ENCODE measurements at regions of chr3 and their contacts with region 1.

Region 1: DNA sequence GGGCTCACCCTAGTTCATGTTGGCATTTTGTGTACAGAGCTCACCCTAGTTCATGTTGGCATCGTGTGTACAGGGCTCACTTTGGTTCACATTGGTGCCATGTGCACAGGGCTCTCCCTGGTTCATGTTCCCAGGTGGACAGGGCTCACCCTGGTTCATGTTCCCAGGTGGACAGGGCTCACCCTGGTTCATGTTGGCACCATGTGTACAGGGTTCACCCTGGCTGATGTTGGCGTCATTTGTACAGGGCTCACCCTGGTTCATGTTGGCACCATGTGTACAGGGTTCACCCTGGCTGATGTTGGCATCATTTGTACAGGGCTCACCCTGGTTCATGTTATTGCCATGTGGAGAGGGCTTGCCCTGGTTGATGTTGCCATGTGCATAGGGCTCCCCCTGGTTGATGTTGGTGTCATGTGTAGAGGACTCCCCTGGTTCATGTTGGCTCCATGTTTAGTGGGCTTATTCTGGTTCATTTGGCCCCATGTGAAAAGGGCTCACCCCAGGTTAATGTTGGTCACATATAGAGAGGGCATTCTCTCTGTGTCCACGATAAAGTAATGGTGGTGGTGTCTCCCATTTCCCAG is 31.7 kb upstream of the NR2C2 start:
- DNase-seq: no peak
- ATAC-seq: peak in 1 of 4 donors; percentile 29
- H3K4me3 ChIP-seq: no peak overlapping the region
- H3K27ac ChIP-seq: no peak overlapping the region
- H3K4me1 ChIP-seq: no peaks in the 10 kb centered on the region
- H3K27me3 ChIP-seq: no peaks in the 10 kb centered on the region
- CTCF ChIP-seq: no peak

Region 2: GRCh38 chr3:14511628-14512280 is 404.0 kb before region 1 on chr3:
- intact Hi-C with region 1: loop called in 2 of 3 experiments (anchors 5 kb)
- DNase-seq: no peak
- ATAC-seq: no peak
- H3K4me3 ChIP-seq: no peak overlapping the region
- H3K27ac ChIP-seq: no peak overlapping the region
- H3K4me1 ChIP-seq: no peaks in the 10 kb centered on the region
- H3K27me3 ChIP-seq: no peaks in the 10 kb centered on the region
- CTCF ChIP-seq: no peak

Region 3: GRCh38 chr3:14678015-14678503 is 237.7 kb before region 1 on chr3:
- intact Hi-C with region 1: loop called in 2 of 3 experiments (anchors 10 kb)
- DNase-seq: peak in 1 of 6 donors; percentile 20
- ATAC-seq: peak; percentile 26 to 72 (median 47)
- H3K4me3 ChIP-seq: no peak overlapping the region
- H3K27ac ChIP-seq: no peak overlapping the region
- H3K4me1 ChIP-seq: no peaks in the 10 kb centered on the region
- H3K27me3 ChIP-seq: no peaks in the 10 kb centered on the region
- CTCF ChIP-seq: no peak

Region 4: DNA sequence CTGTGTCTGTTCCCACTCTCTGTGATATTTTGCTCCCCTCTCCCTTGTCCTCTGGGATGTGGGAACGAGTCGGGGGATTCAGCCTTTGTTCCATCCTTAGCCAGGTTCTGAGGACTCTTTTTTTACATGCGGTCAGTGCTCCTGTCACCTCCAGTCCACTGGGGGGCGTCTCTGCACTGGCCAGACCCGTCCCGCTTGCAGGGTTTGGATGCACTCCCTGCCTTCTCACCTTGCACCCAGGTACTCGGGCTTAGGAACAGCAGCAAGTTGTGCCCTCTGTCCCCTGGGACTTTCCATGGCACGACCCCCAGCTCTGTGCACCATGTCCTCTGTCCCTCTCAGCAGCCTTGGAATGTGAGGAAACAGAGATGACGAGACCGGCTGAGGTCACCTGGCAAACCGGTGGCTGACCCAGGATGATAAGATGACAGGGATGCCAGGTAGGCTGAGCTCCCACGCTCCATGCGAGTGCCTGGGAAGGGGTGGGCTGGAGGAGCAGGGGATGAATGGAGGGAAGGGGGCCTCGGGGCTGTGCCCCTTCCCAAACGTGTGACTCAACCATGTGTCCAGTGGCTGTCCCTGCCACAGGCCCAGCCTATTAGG is 124.3 kb before region 1 on chr3:
- intact Hi-C with region 1: loop called in 2 of 3 experiments (anchors 5 to 10 kb)
- DNase-seq: peak in 4 of 6 donors; percentile 8 to 76 (median 48)
- ATAC-seq: peak; percentile 58 to 88 (median 80)
- H3K4me3 ChIP-seq: no peak overlapping the region
- H3K27ac ChIP-seq: no peak overlapping the region
- H3K4me1 ChIP-seq: no peaks in the 10 kb centered on the region
- H3K27me3 ChIP-seq: peaks cover 0 to 4% (median 0%) of the 10 kb centered on the region in 4 donors
- CTCF ChIP-seq: peak; percentile 18 to 44 (median 32)

Measured in pancreas (tissue), 10 donors.